GM12878 (cell line): ENCODE measurements at regions of chr18 and their contacts with region 1.

Region 1: DNA sequence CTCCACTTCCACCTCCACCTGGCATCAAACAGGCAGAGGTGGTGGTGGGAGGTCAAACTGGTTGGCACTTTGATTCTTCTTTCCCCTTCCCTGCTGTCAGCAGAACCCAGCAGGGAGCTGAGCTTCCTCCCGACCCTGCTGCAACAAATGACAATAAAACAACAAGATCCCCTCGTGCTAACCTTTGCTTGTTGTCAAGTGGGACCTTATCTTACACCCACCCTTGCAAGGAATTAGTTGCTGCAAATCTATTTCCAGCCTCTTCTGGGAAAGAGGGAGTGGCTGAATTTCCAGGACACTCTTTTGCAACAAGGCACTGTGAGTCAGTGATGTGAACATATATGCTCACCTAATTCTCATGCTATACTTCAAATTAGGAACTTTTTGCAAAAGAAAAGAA is 655.1 kb downstream of the DSC3 start:
- DNase-seq: no peak
- ATAC-seq: no peak
- H3K4me3 ChIP-seq: no peak overlapping the region
- H3K27ac ChIP-seq: no peak overlapping the region
- H3K4me1 ChIP-seq: no peaks in the 10 kb centered on the region
- H3K27me3 ChIP-seq: no peaks in the 10 kb centered on the region; a peak in 2 of 4 replicates
- CTCF ChIP-seq: no peak
- EP300 ChIP-seq: no peak
- POLR2A ChIP-seq: no peak
- RAD21 ChIP-seq: no peak

Region 2: DNA sequence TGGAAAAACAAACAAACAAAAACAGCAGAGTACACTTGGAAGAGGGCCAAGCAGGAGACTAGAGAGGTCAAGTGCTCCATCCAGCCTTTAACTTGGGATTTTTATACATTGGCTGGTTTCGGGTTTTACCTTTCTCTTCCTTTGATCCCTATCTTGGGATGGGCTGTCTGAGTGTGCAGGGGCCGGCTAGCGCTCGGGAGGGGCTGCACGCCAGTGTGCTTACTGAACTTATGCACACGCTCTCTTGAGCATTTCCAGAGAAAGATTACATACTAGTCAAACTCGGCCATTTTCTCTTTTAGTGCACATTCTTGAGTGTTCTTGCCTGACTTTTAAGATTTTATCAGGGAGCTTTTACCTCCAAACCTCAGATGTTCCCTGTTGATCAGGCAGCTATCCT is 52.6 kb before region 1 on chr18:
- CTCF ChIA-PET with region 1: no interaction called
- POLR2A ChIA-PET with region 1: no interaction called
- RAD21 ChIA-PET with region 1: no interaction called
- SMC1A ChIA-PET with region 1: interaction called, 3 read pairs
- in situ Hi-C with region 1: no loop called
- intact Hi-C with region 1: loop called (anchors 10 kb)
- DNase-seq: no peak
- ATAC-seq: no peak
- H3K4me3 ChIP-seq: no peak overlapping the region
- H3K27ac ChIP-seq: no peak overlapping the region
- H3K4me1 ChIP-seq: no peaks in the 10 kb centered on the region
- H3K27me3 ChIP-seq: no peaks in the 10 kb centered on the region
- CTCF ChIP-seq: no peak
- EP300 ChIP-seq: no peak
- POLR2A ChIP-seq: no peak
- RAD21 ChIP-seq: no peak